Heart left ventricle (tissue), 16 donors: ENCODE measurements at regions of chr12 and their contacts with region 1.

Region 1: DNA sequence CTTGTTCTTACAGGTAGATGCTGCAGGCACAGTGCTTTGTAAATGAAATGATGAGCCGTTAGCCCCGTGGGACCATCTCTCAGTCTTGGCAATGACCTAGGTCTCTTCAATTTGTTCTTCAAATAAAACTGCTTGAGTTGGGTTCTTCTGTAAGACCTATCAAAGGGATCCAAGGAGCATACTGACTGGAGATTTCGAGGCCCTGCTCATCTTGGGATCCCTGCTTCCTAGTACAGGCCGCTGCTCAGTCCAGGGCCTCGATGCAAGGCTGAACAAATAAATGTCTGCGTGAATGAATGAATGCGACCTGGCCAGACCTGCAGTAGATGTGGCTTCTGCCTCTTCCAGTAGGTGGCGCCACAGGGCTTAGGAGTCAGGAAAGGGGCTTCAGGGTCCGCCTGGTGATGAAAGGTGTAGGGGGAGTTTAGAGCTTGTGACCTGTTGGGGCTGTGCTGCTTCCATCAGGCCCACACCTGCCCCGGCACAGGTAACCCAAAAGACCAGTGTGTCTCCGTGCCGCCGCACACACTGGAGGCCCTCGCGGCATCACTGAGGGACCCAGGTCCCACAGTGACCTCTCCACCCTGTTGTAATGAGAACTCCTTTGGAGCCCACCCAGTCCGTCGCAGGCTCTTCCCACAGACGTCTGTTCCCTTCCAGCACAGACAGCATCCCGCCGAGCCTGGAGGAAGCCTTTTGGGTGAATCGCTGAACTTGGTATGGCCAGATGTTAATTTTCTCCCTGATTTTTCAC is 4.4 kb downstream of the CACNA1C start:
- DNase-seq: peak; percentile 58 to 78 (median 69)
- ATAC-seq: peak; percentile 8 to 22 (median 8)
- H3K4me3 ChIP-seq: peak overlapping the region in 2 of 12 donors; percentile 1 to 39
- H3K27ac ChIP-seq: peak overlapping the region in 8 of 12 donors; percentile 14 to 91 (median 56)
- H3K4me1 ChIP-seq: peaks cover 0 to 80% (median 28%) of the 10 kb centered on the region in 12 donors
- H3K27me3 ChIP-seq: peaks cover 0 to 32% (median 0%) of the 10 kb centered on the region in 9 donors
- CTCF ChIP-seq: peak; percentile 59 to 81 (median 70)
- POLR2A ChIP-seq: no peak

Region 2: DNA sequence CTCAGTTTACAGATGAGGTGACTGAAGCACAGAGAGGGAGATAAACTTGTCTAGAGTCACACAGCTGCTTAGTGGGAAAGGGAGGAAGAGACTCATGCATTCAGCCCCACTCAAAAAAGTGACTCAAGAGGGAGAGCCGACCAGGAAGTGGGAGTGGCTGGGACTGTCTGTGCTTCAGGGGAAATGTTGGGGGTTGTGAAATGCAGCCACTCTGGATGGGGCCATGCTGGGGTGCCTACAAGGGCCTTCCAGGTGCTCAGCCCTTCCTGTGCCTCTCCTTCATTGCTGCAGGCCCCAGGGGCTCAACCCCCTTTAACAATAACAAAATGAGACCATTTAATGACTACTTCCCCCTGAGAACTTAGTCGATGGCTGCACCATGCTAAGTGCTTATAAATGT is 37.4 kb after region 1 on chr12:
- intact Hi-C with region 1: no loop called
- DNase-seq: no peak
- ATAC-seq: no peak
- H3K4me3 ChIP-seq: no peak overlapping the region
- H3K27ac ChIP-seq: peak overlapping the region in 10 of 12 donors; percentile 20 to 95 (median 87)
- H3K4me1 ChIP-seq: peaks cover 5 to 86% (median 57%) of the 10 kb centered on the region in 12 donors
- H3K27me3 ChIP-seq: no peaks in the 10 kb centered on the region
- CTCF ChIP-seq: no peak
- POLR2A ChIP-seq: no peak

Region 3: DNA sequence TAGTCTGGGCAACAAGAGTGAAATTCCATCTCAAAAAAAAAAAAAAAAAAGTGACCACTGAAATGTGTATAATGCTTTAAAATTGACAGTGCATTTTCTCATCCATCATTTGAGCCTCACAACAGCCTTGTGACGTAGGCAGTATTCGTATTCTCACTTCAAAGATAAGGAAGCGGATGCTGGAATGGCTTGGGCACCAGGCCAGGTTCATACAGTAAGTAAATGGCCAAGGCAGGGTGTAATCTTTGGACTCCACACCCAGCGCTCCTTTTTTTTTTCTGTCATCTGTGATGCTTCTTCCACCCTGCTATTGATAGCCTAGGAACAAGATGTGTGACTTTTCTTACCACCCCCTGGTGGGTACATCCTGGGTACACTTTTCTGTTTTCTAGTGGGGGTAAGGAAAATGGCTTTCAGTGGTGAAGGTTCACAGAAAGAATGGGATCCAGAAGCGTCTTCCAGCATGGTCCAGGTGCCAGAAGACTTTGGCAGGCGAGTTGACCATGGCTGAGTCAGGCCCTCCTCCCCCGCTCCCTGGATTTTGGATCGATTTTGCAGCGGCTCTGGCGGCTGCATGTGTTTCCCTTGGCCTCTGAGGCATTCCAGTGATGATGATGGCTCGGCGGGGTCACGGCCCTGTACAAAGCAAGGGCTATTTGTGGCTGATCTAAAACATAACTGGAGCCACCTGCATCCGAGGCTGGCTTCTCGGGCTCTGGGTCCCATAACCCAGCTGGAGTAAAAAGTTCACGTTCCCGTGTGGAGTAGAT is 106.1 kb after region 1 on chr12:
- intact Hi-C with region 1: loop called in 5 of 10 experiments (anchors 5 to 10 kb)
- DNase-seq: peak; percentile 91 to 95 (median 93)
- ATAC-seq: peak; percentile 79 to 94 (median 91)
- H3K4me3 ChIP-seq: no peak overlapping the region
- H3K27ac ChIP-seq: peak overlapping the region; percentile 60 to 86 (median 82)
- H3K4me1 ChIP-seq: peaks cover 4 to 67% (median 43%) of the 10 kb centered on the region in 12 donors
- H3K27me3 ChIP-seq: no peaks in the 10 kb centered on the region
- CTCF ChIP-seq: peak in 4 of 12 donors; percentile 5 to 14 (median 8)
- POLR2A ChIP-seq: no peak

Region 4: GRCh38 chr12:2273288-2273687 is 216.1 kb after region 1 on chr12:
- intact Hi-C with region 1: loop called in 6 of 10 experiments (anchors 5 to 10 kb)
- DNase-seq: peak in 4 of 5 donors; percentile 48 to 63 (median 60)
- ATAC-seq: peak; percentile 60 to 72 (median 66)
- H3K4me3 ChIP-seq: no peak overlapping the region
- H3K27ac ChIP-seq: peak overlapping the region in 6 of 12 donors; percentile 11 to 73 (median 44)
- H3K4me1 ChIP-seq: peaks cover 0 to 73% (median 20%) of the 10 kb centered on the region in 12 donors
- H3K27me3 ChIP-seq: no peaks in the 10 kb centered on the region
- CTCF ChIP-seq: peak in 9 of 12 donors; percentile 35 to 61 (median 49)
- POLR2A ChIP-seq: no peak

Region 5: GRCh38 chr12:2501464-2502191 is 444.4 kb after region 1 on chr12:
- intact Hi-C with region 1: loop called in 1 of 10 experiments (anchors 10 kb)
- DNase-seq: peak in 4 of 5 donors; percentile 52 to 70 (median 62)
- ATAC-seq: peak; percentile 63 to 83 (median 68)
- H3K4me3 ChIP-seq: no peak overlapping the region
- H3K27ac ChIP-seq: peak overlapping the region; percentile 18 to 93 (median 80)
- H3K4me1 ChIP-seq: peaks cover 10 to 63% (median 43%) of the 10 kb centered on the region in 12 donors
- H3K27me3 ChIP-seq: no peaks in the 10 kb centered on the region
- CTCF ChIP-seq: no peak
- POLR2A ChIP-seq: no peak